H1 (cell line): ENCODE measurements at regions of chr6 and their contacts with region 1.

Region 1: DNA sequence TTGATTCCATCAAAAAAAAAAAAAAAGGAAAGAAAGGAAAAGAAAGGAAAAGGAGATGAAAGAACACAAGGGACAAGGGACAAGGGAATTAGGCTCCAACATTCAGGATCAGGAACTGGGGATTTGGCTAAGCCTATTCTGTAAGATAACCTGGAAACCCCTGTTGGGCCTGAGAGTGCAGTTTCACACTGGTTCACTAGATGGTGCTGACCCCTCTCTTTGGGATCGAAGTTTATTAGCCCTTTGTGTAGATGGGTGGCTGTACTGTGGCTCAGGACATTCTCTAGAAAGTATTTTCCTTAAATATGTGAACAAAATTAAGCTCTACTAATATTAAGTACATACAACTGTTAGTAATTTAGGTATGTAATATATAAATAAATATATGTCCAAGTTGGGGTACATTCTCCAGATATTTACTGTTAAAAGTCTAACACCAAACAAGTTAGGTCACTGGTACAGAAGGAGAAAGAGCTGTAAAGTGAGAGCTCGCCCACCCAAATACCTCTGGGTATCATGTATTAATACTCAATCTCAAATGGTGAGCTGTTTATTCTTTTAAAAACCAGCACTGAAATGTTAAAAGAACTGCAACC is 6.3 kb downstream of the OR2A4 start:
- DNase-seq: peak; percentile 38 to 63
- H3K4me3 ChIP-seq: no peak overlapping the region
- H3K27ac ChIP-seq: no peak overlapping the region
- H3K4me1 ChIP-seq: peaks cover 0 to 3% (median 1%) of the 10 kb centered on the region in 4 experiments; a peak in 2 of 7 replicates
- H3K27me3 ChIP-seq: no peaks in the 10 kb centered on the region
- CTCF ChIP-seq: peak; percentile 58 to 92 (median 87)
- EP300 ChIP-seq: no peak
- POLR2A ChIP-seq: no peak
- RAD21 ChIP-seq: peak; percentile 96 to 97

Region 2: GRCh38 chr6:131669891-131670290 is 25.0 kb before region 1 on chr6:
- CTCF ChIA-PET with region 1: interaction called, 15 read pairs
- POLR2A ChIA-PET with region 1: no interaction called
- DNase-seq: no peak
- H3K4me3 ChIP-seq: no peak overlapping the region
- H3K27ac ChIP-seq: no peak overlapping the region
- H3K4me1 ChIP-seq: no peaks in the 10 kb centered on the region
- H3K27me3 ChIP-seq: peaks cover 0 to 1% (median 0%) of the 10 kb centered on the region in 4 experiments; a peak in 1 of 7 replicates
- CTCF ChIP-seq: no peak
- EP300 ChIP-seq: no peak
- POLR2A ChIP-seq: no peak
- RAD21 ChIP-seq: no peak

Region 3: DNA sequence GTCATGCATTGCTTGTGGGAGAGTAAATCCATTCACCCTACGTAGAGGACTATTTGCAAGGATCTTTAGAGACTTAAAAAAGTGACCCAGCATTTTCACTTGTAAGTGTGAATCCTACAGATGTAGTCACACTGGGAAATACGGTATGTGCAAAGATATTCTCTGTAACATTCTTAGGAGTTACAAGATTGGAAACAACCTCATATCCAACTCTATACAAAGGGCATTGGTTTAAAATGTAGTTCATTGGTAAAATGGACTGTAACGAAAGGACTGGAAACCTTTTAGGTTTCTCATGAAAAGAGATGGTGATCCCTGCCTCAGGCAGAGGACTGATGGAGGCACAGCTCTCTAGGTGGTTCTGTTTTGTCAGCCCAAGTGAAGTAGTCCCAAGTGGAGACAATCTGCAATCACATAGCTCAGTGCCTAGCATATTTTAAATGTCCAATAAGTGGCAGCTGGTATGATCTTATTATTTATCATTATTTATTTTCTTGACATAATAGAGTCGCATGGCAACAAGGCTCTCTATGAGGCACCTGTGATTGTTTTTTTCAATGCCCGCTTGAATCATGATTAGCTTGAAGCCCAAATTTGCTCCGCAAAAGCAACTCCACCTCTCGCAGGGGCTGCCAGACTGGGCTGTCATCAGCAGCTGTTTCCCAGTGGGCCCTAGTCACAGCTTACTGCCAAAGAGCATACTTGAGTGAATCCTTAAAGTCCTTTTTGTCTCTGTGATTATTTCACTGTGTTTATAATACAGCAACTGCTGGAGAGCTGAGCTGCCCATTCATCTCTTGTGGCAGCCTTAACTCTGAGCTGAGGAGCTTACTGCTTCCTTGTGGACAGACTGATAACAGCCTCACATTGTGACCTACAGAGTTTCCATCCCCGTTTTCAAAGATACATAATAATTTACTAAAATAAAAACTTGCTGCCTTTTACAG is 93.1 kb after region 1 on chr6:
- CTCF ChIA-PET with region 1: interaction called, 12 read pairs
- POLR2A ChIA-PET with region 1: no interaction called
- DNase-seq: no peak
- H3K4me3 ChIP-seq: no peak overlapping the region
- H3K27ac ChIP-seq: no peak overlapping the region
- H3K4me1 ChIP-seq: 0 out of 7 replicates have a peak, but pooled peaks cover 0 to 2% (median 0%) of the 10 kb centered on the region in 4 experiments
- H3K27me3 ChIP-seq: no peaks in the 10 kb centered on the region
- CTCF ChIP-seq: peak in 2 of 3 experiments; percentile 17 to 28; a peak in 1 of 4 replicates
- EP300 ChIP-seq: no peak
- POLR2A ChIP-seq: no peak
- RAD21 ChIP-seq: peak; percentile 35 to 44

Region 4: DNA sequence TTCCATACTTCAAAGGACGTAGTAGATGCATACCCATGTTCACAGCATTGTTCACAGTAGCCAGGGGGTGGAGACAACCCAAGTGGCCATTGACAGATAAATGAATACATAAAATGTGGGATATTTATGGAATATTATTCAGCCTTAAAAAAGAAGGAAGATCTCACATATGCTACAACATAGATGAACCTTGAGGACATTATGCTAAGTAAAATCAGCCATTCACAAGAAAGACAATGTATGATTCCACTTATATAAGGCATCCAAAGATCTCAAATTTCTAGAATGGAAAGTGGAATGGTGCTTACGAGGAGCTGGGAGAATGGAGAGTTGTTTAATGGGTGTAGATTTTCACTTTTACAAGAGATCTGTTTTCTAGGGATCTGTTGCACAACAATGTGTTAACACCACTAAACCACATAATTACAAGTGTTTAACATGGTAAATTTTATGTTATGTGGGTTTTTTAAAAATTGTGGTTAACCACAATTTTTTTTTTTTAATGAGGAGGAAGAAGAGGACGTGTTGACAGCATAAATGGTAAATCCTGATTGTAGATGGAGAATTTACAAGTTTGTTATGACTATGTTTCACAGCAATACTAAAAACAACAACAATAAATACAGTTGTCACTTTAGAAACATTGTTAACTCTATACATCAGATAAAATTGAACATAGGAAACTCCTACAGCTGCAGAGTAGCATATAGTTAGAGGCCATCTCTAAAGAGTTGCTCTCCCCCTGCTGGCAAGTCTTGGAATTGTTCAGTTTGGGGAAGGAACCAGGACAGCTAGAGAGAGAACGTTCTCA is 214.7 kb after region 1 on chr6:
- CTCF ChIA-PET with region 1: interaction called, 43 read pairs
- POLR2A ChIA-PET with region 1: interaction called, 5 read pairs
- DNase-seq: peak in 1 of 2 experiments; percentile 89
- H3K4me3 ChIP-seq: no peak overlapping the region
- H3K27ac ChIP-seq: no peak overlapping the region
- H3K4me1 ChIP-seq: peaks cover 0 to 8% (median 5%) of the 10 kb centered on the region in 4 experiments; a peak in 3 of 7 replicates
- H3K27me3 ChIP-seq: no peaks in the 10 kb centered on the region
- CTCF ChIP-seq: peak in 2 of 3 experiments; percentile 74 to 75; a peak in 3 of 4 replicates
- EP300 ChIP-seq: no peak
- POLR2A ChIP-seq: peak in 1 of 2 experiments; percentile 70; a peak in 1 of 3 replicates
- RAD21 ChIP-seq: peak; percentile 67 to 72

Region 5: DNA sequence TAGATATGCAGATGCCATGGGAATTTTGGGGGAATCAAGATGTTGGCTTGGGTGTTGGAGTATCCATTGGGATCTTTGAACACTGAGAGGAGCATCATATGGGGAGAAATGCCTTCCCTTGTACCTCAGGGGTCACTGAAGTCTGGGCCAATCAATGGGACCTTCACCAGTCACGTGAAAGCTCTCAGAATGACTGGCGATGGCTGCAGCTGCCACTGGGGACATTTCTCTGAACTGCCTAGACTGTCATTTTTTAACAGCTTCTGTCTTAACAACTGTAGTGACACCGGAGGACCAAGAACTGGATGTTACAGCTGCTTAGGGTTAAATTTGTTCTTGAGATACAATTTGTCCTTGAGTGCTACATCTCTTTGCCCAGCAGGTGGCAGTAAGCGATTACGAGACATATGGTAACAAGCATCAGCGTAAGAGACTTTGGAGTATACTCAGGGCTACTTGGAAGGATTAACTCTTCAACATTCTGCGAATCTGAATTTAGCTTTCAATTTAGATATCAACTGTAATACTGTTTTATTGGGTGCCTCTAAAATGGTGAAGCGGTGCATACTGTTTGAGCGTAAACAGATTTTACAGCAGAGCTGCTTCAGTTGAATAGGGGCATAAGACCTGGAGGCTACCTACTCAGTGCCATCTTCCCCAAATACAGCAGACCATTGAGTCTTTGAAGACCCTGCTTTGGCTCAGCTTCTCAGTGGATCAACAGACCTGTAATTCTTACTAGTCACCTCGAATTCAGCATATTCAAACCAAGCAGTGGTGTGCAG is 220.2 kb after region 1 on chr6:
- CTCF ChIA-PET with region 1: interaction called, 43 read pairs
- POLR2A ChIA-PET with region 1: interaction called, 5 read pairs
- DNase-seq: no peak
- H3K4me3 ChIP-seq: no peak overlapping the region
- H3K27ac ChIP-seq: no peak overlapping the region
- H3K4me1 ChIP-seq: no peaks in the 10 kb centered on the region
- H3K27me3 ChIP-seq: no peaks in the 10 kb centered on the region
- CTCF ChIP-seq: peak in 2 of 3 experiments; percentile 48 to 71; a peak in 3 of 4 replicates
- EP300 ChIP-seq: no peak
- POLR2A ChIP-seq: peak; percentile 19 to 84; a peak in 2 of 3 replicates
- RAD21 ChIP-seq: peak; percentile 49 to 64

Region 6: DNA sequence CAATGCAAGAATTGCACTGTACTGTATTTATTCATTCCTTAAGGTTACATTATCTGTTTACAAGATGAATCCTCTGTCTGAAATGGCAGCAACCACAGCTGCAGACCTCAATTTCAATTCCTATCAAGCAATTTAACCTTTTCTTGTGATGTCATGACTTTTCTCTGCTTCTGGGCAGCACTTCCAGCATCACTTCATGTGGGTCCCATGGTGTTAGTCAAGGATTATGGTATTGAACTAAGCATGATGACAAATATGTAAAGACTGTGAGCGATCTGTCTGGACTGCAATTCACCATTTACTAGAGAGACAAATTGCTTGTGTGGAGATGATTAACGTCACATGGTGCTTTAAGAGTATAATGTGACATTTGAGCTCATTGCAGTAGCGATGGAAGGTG is 346.8 kb after region 1 on chr6:
- CTCF ChIA-PET with region 1: no interaction called
- POLR2A ChIA-PET with region 1: no interaction called
- DNase-seq: no peak
- H3K4me3 ChIP-seq: no peak overlapping the region
- H3K27ac ChIP-seq: no peak overlapping the region
- H3K4me1 ChIP-seq: no peaks in the 10 kb centered on the region
- H3K27me3 ChIP-seq: no peaks in the 10 kb centered on the region
- CTCF ChIP-seq: no peak
- EP300 ChIP-seq: no peak
- POLR2A ChIP-seq: no peak
- RAD21 ChIP-seq: no peak